GM12878 (cell line): ENCODE measurements at regions of chr2 and their contacts with region 1.

Region 1: GRCh38 chr2:236512902-236513435 is 56.7 kb upstream of the ACKR3 start:
- DNase-seq: peak; percentile 45
- ATAC-seq: peak; percentile 99
- H3K4me3 ChIP-seq: no peak overlapping the region
- H3K27ac ChIP-seq: no peak overlapping the region
- H3K4me1 ChIP-seq: peaks cover 5% of the 10 kb centered on the region
- H3K27me3 ChIP-seq: no peaks in the 10 kb centered on the region; a peak in 1 of 4 replicates
- CTCF ChIP-seq: peak; percentile 90 to 92 (median 90)
- EP300 ChIP-seq: no peak
- POLR2A ChIP-seq: no peak
- RAD21 ChIP-seq: peak; percentile 86

Region 2: GRCh38 chr2:236089271-236090026 is 423.5 kb before region 1 on chr2:
- CTCF ChIA-PET with region 1: no interaction called
- POLR2A ChIA-PET with region 1: no interaction called
- RAD21 ChIA-PET with region 1: no interaction called
- SMC1A ChIA-PET with region 1: no interaction called
- in situ Hi-C with region 1: no loop called
- intact Hi-C with region 1: no loop called
- DNase-seq: no peak
- ATAC-seq: no peak
- H3K4me3 ChIP-seq: no peak overlapping the region
- H3K27ac ChIP-seq: no peak overlapping the region
- H3K4me1 ChIP-seq: no peaks in the 10 kb centered on the region
- H3K27me3 ChIP-seq: no peaks in the 10 kb centered on the region; a peak in 1 of 4 replicates
- CTCF ChIP-seq: no peak
- EP300 ChIP-seq: no peak
- POLR2A ChIP-seq: no peak
- RAD21 ChIP-seq: no peak

Region 3: GRCh38 chr2:236352761-236353593 is 160.0 kb before region 1 on chr2:
- CTCF ChIA-PET with region 1: interaction called, 6 read pairs
- POLR2A ChIA-PET with region 1: no interaction called
- RAD21 ChIA-PET with region 1: no interaction called
- SMC1A ChIA-PET with region 1: interaction called, 8 read pairs
- in situ Hi-C with region 1: no loop called
- intact Hi-C with region 1: loop called (anchors 10 kb)
- DNase-seq: no peak
- ATAC-seq: peak; percentile 58
- H3K4me3 ChIP-seq: no peak overlapping the region
- H3K27ac ChIP-seq: no peak overlapping the region
- H3K4me1 ChIP-seq: no peaks in the 10 kb centered on the region
- H3K27me3 ChIP-seq: no peaks in the 10 kb centered on the region
- CTCF ChIP-seq: peak; percentile 63 to 80 (median 75); a peak in 5 of 6 replicates
- EP300 ChIP-seq: no peak
- POLR2A ChIP-seq: no peak
- RAD21 ChIP-seq: peak; percentile 84

Region 4: DNA sequence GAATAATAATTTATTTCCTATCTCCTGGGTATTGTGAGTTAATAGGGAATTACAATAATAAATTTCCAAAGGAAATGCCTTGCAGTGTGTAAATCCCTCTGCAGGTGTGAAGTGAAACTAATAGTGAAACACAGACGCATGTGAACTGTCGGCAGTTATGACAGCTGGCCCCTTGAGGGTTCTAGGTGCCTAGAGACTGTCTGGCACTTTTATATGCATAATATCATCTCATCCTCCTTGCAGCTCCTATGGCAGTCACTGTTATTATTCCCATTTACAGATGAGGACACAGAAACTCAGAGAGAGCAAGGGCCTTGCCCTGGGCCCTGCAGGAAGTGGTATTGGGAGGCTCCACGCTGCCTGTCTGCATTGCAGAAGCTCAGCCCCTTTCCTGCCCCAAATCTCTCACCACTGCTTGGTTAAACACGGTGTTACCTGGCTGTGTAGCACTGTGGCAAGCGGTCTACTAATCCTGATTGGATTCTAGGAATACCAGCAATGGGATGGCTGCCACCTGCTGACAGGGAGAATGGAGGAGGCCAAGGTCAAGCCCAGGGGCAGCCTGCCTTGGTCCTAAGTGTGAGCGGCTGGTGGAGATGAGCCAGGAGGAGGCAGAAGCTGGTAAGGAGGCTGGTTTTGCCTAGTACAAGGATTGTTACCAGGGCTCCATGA is 23.9 kb after region 1 on chr2:
- CTCF ChIA-PET with region 1: interaction called, 92 read pairs
- POLR2A ChIA-PET with region 1: interaction called, 8 read pairs
- RAD21 ChIA-PET with region 1: interaction called, 40 read pairs
- SMC1A ChIA-PET with region 1: interaction called, 85 read pairs
- in situ Hi-C with region 1: no loop called
- intact Hi-C with region 1: no loop called
- DNase-seq: peak; percentile 53
- ATAC-seq: peak; percentile 77
- H3K4me3 ChIP-seq: peak overlapping the region; percentile 55
- H3K27ac ChIP-seq: peak overlapping the region; percentile 82
- H3K4me1 ChIP-seq: peaks cover 22% of the 10 kb centered on the region
- H3K27me3 ChIP-seq: no peaks in the 10 kb centered on the region
- CTCF ChIP-seq: peak in 1 of 3 experiments; percentile 12; a peak in 1 of 6 replicates
- EP300 ChIP-seq: peak; percentile 61 to 87; a peak in 2 of 4 replicates
- POLR2A ChIP-seq: 0 out of 2 replicates have a peak, but pooled peaks have one; percentile 33
- RAD21 ChIP-seq: no peak

Region 5: GRCh38 chr2:236551471-236552211 is 38.7 kb after region 1 on chr2:
- CTCF ChIA-PET with region 1: interaction called, 57 read pairs
- POLR2A ChIA-PET with region 1: interaction called, 4 read pairs
- RAD21 ChIA-PET with region 1: interaction called, 14 read pairs
- SMC1A ChIA-PET with region 1: interaction called, 65 read pairs
- in situ Hi-C with region 1: no loop called
- intact Hi-C with region 1: loop called (anchors 2 kb)
- DNase-seq: peak; percentile 70
- ATAC-seq: peak; percentile 79
- H3K4me3 ChIP-seq: no peak overlapping the region; the same call in 1 of the 2 replicates
- H3K27ac ChIP-seq: peak overlapping the region; percentile 91
- H3K4me1 ChIP-seq: peaks cover 77% of the 10 kb centered on the region
- H3K27me3 ChIP-seq: no peaks in the 10 kb centered on the region
- CTCF ChIP-seq: no peak
- EP300 ChIP-seq: peak; percentile 30 to 42; a peak in 2 of 4 replicates
- POLR2A ChIP-seq: peak; percentile 65
- RAD21 ChIP-seq: no peak

Region 6: GRCh38 chr2:236631281-236631855 is 118.4 kb after region 1 on chr2:
- CTCF ChIA-PET with region 1: no interaction called
- POLR2A ChIA-PET with region 1: no interaction called
- RAD21 ChIA-PET with region 1: no interaction called
- SMC1A ChIA-PET with region 1: no interaction called
- in situ Hi-C with region 1: no loop called
- intact Hi-C with region 1: no loop called
- DNase-seq: no peak
- ATAC-seq: no peak
- H3K4me3 ChIP-seq: no peak overlapping the region
- H3K27ac ChIP-seq: no peak overlapping the region
- H3K4me1 ChIP-seq: no peaks in the 10 kb centered on the region
- H3K27me3 ChIP-seq: peaks cover 0 to 3% of the 10 kb centered on the region in 2 experiments; a peak in 2 of 4 replicates
- CTCF ChIP-seq: no peak
- EP300 ChIP-seq: no peak
- POLR2A ChIP-seq: no peak
- RAD21 ChIP-seq: no peak

Region 7: DNA sequence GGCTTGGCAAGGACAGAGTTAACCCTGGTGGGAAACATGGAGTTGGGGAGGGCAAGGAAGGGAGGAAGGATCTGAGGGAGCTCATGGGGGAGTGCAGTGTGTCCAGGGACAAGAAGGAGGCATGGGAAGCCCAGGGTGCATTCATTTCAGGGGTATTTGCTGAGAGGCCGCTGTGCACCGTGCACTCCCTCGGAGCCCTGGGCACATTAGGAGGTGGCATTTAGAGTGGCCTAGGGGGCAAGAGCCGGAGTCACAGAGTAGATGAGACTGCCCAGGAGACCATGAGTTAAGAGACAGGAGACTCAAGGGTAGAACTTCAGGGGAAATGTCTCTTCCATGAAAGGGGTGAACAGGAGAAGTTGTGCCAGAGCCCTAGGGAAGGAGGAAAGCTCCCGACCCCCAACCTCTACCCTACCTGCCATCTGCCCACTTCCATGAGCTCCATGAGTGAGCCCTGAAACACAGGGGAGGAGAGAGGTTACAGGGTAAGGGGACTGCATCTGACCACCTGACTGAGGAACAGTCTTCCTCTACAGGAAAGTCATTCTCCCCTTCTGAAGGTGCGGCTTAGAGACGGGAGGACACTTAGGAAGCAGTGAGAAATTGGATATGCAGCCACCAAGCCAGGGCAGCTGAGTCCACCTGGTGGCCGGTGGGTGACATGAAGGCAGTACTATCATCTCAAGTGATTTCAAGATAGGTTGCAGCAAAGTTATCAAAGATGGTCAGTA is 514.2 kb after region 1 on chr2:
- CTCF ChIA-PET with region 1: interaction called, 12 read pairs
- POLR2A ChIA-PET with region 1: no interaction called
- RAD21 ChIA-PET with region 1: interaction called, 8 read pairs
- SMC1A ChIA-PET with region 1: interaction called, 10 read pairs
- in situ Hi-C with region 1: no loop called
- intact Hi-C with region 1: no loop called
- DNase-seq: no peak
- ATAC-seq: peak; percentile 88
- H3K4me3 ChIP-seq: no peak overlapping the region
- H3K27ac ChIP-seq: no peak overlapping the region
- H3K4me1 ChIP-seq: no peaks in the 10 kb centered on the region
- H3K27me3 ChIP-seq: no peaks in the 10 kb centered on the region
- CTCF ChIP-seq: peak; percentile 65 to 71 (median 70)
- EP300 ChIP-seq: no peak
- POLR2A ChIP-seq: no peak
- RAD21 ChIP-seq: peak; percentile 87

Region 8: GRCh38 chr2:237072067-237072931 is 559.3 kb after region 1 on chr2:
- CTCF ChIA-PET with region 1: interaction called, 9 read pairs
- POLR2A ChIA-PET with region 1: no interaction called
- RAD21 ChIA-PET with region 1: interaction called, 4 read pairs
- SMC1A ChIA-PET with region 1: interaction called, 7 read pairs
- in situ Hi-C with region 1: loop called (anchors 5 kb)
- intact Hi-C with region 1: no loop called
- DNase-seq: no peak
- ATAC-seq: peak; percentile 81
- H3K4me3 ChIP-seq: no peak overlapping the region
- H3K27ac ChIP-seq: no peak overlapping the region
- H3K4me1 ChIP-seq: no peaks in the 10 kb centered on the region
- H3K27me3 ChIP-seq: no peaks in the 10 kb centered on the region
- CTCF ChIP-seq: peak; percentile 92 to 95 (median 94)
- EP300 ChIP-seq: no peak
- POLR2A ChIP-seq: no peak
- RAD21 ChIP-seq: peak; percentile 97